Ascending aorta (tissue), 2 donors: ENCODE measurements at regions of chr1 and their contacts with region 1.

Region 1: GRCh38 chr1:47656719-47657685 is 219.2 kb downstream of the FOXD2 start:
- DNase-seq: peak; percentile 79 to 96
- H3K4me3 ChIP-seq: peak overlapping the region in 1 of 2 donors; percentile 20
- H3K27ac ChIP-seq: peak overlapping the region; percentile 97 to 98
- H3K4me1 ChIP-seq: peaks cover 3 to 60% of the 10 kb centered on the region in 2 donors
- H3K27me3 ChIP-seq: no peaks in the 10 kb centered on the region
- CTCF ChIP-seq: no peak

Region 2: GRCh38 chr1:47521034-47521881 is 135.7 kb before region 1 on chr1:
- intact Hi-C with region 1: loop called (anchors 5 kb)
- DNase-seq: peak; percentile 67 to 92
- H3K4me3 ChIP-seq: no peak overlapping the region
- H3K27ac ChIP-seq: peak overlapping the region; percentile 83 to 90
- H3K4me1 ChIP-seq: peaks cover 4 to 26% of the 10 kb centered on the region in 2 donors
- H3K27me3 ChIP-seq: no peaks in the 10 kb centered on the region
- CTCF ChIP-seq: no peak

Region 3: DNA sequence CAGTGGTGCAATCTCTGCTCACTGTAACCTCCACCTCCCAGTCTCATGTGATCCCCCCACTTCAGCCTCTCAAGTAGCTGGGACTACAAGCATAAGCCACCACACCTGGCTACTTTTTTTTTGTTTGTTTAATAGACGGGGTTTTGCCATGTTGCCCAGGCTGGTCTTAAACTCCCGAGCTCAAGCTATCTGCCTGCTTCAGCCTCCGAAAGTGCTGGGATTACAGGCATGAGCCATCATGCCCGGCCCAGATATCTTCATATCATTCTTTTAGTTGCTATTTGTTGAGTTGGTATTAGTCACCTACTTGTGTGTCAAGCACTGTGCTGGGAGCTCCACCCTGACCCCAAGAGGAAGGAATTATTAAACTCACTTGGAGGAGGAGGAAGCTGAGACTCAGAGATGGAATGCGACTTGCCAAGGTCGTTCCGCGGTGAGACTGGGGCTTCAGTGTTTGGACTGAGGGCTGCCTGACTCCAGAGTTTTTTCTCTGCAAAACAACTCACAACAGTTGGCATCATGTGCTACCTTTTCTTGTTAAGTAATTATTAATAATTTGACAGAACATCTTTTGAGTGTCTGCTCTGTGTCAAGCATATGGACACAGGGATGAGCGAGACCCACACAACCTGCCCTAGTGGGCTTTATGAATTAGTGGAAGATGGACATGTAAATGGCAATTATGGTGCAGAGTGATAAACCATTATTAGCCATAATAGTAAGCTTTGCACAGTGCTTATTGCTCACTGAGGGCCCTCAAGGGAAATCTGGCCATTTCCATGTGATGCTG is 87.1 kb before region 1 on chr1:
- intact Hi-C with region 1: loop called (anchors 1 kb)
- DNase-seq: peak; percentile 31 to 89
- H3K4me3 ChIP-seq: no peak overlapping the region
- H3K27ac ChIP-seq: peak overlapping the region in 1 of 2 donors; percentile 22
- H3K4me1 ChIP-seq: peaks cover 0 to 9% of the 10 kb centered on the region in 2 donors
- H3K27me3 ChIP-seq: no peaks in the 10 kb centered on the region
- CTCF ChIP-seq: peak; percentile 45 to 69 (median 69)

Region 4: DNA sequence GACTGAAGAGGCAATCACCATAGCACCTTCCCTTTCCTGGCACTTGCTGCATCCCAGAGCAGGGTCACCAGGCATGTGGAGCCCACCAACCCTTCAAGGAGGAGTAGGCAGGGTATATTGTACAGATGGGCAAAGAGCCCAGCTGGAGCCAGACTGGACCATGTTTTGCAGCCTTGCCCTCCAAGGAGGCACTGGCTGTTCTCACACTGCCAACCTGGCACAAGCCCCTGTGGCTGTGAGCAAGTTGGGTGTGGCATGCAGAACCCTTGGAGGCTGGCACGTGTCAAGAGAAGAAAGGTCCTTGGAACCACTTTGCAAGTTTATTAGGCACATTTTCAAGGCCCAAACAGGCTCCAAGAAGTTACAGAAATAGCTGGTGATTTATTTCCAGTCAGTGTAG is 72.8 kb before region 1 on chr1:
- intact Hi-C with region 1: loop called (anchors 2 kb)
- DNase-seq: peak; percentile 39 to 88
- H3K4me3 ChIP-seq: no peak overlapping the region
- H3K27ac ChIP-seq: peak overlapping the region; percentile 16 to 43
- H3K4me1 ChIP-seq: peaks cover 14 to 40% of the 10 kb centered on the region in 2 donors
- H3K27me3 ChIP-seq: no peaks in the 10 kb centered on the region
- CTCF ChIP-seq: no peak

Region 5: GRCh38 chr1:47684964-47685762 is 28.2 kb after region 1 on chr1:
- intact Hi-C with region 1: loop called (anchors 2 kb)
- DNase-seq: peak in 1 of 2 donors; percentile 83
- H3K4me3 ChIP-seq: peak overlapping the region in 1 of 2 donors; percentile 9
- H3K27ac ChIP-seq: peak overlapping the region; percentile 85 to 89
- H3K4me1 ChIP-seq: peaks cover 0 to 31% of the 10 kb centered on the region in 2 donors
- H3K27me3 ChIP-seq: no peaks in the 10 kb centered on the region
- CTCF ChIP-seq: peak in 1 of 3 experiments; percentile 2

Region 6: GRCh38 chr1:47703981-47704596 is 47.1 kb after region 1 on chr1:
- intact Hi-C with region 1: loop called (anchors 2 kb)
- DNase-seq: no peak
- H3K4me3 ChIP-seq: no peak overlapping the region
- H3K27ac ChIP-seq: peak overlapping the region; percentile 39 to 61
- H3K4me1 ChIP-seq: peaks cover 0 to 19% of the 10 kb centered on the region in 2 donors
- H3K27me3 ChIP-seq: no peaks in the 10 kb centered on the region
- CTCF ChIP-seq: peak; percentile 30 to 58 (median 48)